ENCODE measurements at regions of chr13 and their contacts with region 1.

Region 1: GRCh38 chr13:99246100-99246499 is 12.1 kb downstream of the GPR18 start:
- DNase-seq: no peak
- ATAC-seq: no peak
- H3K4me3 Mint-ChIP-seq: no peak overlapping the region
- H3K27ac Mint-ChIP-seq: no peak overlapping the region
- H3K4me1 Mint-ChIP-seq: peaks cover 18% of the 10 kb centered on the region
- H3K27me3 Mint-ChIP-seq: no peaks in the 10 kb centered on the region
- CTCF ChIP-seq: no peak

Region 2: DNA sequence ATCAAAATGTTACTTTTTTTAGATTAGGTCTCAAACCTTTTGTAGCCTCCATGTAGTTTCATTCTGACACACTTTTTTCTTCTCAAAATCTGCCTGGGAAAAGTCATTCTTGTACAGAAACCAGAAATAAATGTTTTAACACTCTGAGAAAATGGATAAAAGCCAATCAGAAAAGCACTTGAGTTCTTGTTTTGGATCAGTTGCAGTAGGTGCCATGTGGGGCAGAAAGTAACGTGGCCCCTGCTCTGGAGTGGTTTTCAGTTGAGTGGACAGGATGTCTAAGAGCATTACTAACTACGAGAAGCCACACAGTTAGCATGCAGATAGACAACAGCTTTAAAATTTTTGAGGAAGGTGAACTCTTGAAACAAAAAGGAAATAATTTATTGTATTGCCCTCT is 42.0 kb after region 1 on chr13:
- CTCF ChIA-PET with region 1: no interaction called
- POLR2A ChIA-PET with region 1: interaction called, 12 read pairs
- intact Hi-C with region 1: no loop called
- DNase-seq: no peak
- ATAC-seq: peak; percentile 85
- H3K4me3 Mint-ChIP-seq: peak overlapping the region; percentile 60
- H3K27ac Mint-ChIP-seq: peak overlapping the region; percentile 86
- H3K4me1 Mint-ChIP-seq: peaks cover 89% of the 10 kb centered on the region
- H3K27me3 Mint-ChIP-seq: no peaks in the 10 kb centered on the region
- CTCF ChIP-seq: no peak